Gastrocnemius medialis (tissue), 4 donors: ENCODE measurements at regions of chr14 and their contacts with region 1.

Region 1: GRCh38 chr14:80996049-80996901 is 40.9 kb downstream of the TSHR start:
- DNase-seq: peak; percentile 26 to 32
- ATAC-seq: peak; percentile 99
- H3K4me3 ChIP-seq: peak overlapping the region in 1 of 4 donors; percentile 21
- H3K27ac ChIP-seq: no peak overlapping the region
- H3K4me1 ChIP-seq: no peaks in the 10 kb centered on the region
- H3K27me3 ChIP-seq: no peaks in the 10 kb centered on the region
- CTCF ChIP-seq: peak; percentile 43 to 71 (median 54)
- POLR2A ChIP-seq: no peak

Region 2: GRCh38 chr14:81147140-81147897 is 151.0 kb after region 1 on chr14:
- in situ Hi-C with region 1: no loop called
- intact Hi-C with region 1: no loop called
- DNase-seq: no peak
- ATAC-seq: no peak
- H3K4me3 ChIP-seq: no peak overlapping the region
- H3K27ac ChIP-seq: no peak overlapping the region
- H3K4me1 ChIP-seq: peaks cover 0 to 3% of the 10 kb centered on the region in 2 donors
- H3K27me3 ChIP-seq: no peaks in the 10 kb centered on the region
- CTCF ChIP-seq: no peak
- POLR2A ChIP-seq: no peak

Region 3: DNA sequence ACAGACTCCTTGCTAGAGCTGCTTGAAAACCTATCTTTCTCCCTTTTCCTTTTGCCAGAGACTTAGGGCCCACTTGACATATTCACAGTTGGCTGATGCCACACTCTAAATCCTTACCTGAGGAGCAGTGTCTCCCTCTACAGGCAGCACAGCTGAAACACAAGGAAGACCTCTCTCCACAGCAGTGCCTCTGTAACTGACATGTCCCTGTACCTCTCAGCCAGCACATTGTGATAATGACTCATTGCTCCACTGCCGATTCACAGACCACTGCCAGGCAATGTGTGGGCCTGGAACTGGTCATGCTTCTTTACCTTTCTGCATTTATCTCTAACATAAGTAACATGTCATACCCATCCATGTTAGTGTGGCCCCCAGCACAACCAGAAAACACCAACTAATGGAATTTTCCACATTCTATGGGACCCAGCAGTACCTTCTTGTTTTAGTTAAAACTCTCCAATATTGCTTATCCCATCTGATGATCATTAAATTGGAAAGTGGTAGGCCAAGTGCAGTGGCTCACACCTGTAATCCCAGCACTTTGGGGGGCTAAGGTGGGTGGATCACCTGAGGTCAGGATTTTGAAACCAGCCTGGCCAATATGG is 168.0 kb after region 1 on chr14:
- in situ Hi-C with region 1: loop called in 3 of 4 experiments (anchors 10 kb)
- intact Hi-C with region 1: no loop called
- DNase-seq: peak in 1 of 2 donors; percentile 40
- ATAC-seq: peak; percentile 79 to 85
- H3K4me3 ChIP-seq: no peak overlapping the region
- H3K27ac ChIP-seq: no peak overlapping the region
- H3K4me1 ChIP-seq: peaks cover 2% of the 10 kb centered on the region in 2 donors
- H3K27me3 ChIP-seq: no peaks in the 10 kb centered on the region
- CTCF ChIP-seq: peak in 3 of 5 experiments; percentile 11 to 46 (median 30)
- POLR2A ChIP-seq: no peak

Region 4: GRCh38 chr14:81211844-81212243 is 215.6 kb after region 1 on chr14:
- in situ Hi-C with region 1: no loop called
- intact Hi-C with region 1: loop called (anchors 1 kb)
- DNase-seq: peak; percentile 22 to 47
- ATAC-seq: peak; percentile 76 to 85
- H3K4me3 ChIP-seq: no peak overlapping the region
- H3K27ac ChIP-seq: peak overlapping the region in 1 of 4 donors; percentile 91
- H3K4me1 ChIP-seq: peaks cover 12 to 29% of the 10 kb centered on the region in 2 donors
- H3K27me3 ChIP-seq: no peaks in the 10 kb centered on the region
- CTCF ChIP-seq: peak in 4 of 5 experiments; percentile 28 to 68 (median 56)
- POLR2A ChIP-seq: no peak